MCF 10A (cell line): ENCODE measurements at regions of chr12 and their contacts with region 1.

Region 1: GRCh38 chr12:100229058-100229637 is 28.5 kb downstream of the ACTR6 start:
- DNase-seq: peak; percentile 53
- H3K4me3 Mint-ChIP-seq: peak overlapping the region; percentile 10
- H3K27ac Mint-ChIP-seq: no peak overlapping the region
- H3K4me1 Mint-ChIP-seq: peaks cover 7% of the 10 kb centered on the region
- H3K27me3 Mint-ChIP-seq: no peaks in the 10 kb centered on the region
- CTCF ChIP-seq: peak; percentile 15

Region 2: GRCh38 chr12:100020370-100020769 is 208.8 kb before region 1 on chr12:
- CTCF ChIA-PET with region 1: no interaction called
- POLR2A ChIA-PET with region 1: no interaction called
- intact Hi-C with region 1: no loop called
- DNase-seq: no peak
- H3K4me3 Mint-ChIP-seq: no peak overlapping the region
- H3K27ac Mint-ChIP-seq: no peak overlapping the region
- H3K4me1 Mint-ChIP-seq: peaks cover 11% of the 10 kb centered on the region
- H3K27me3 Mint-ChIP-seq: no peaks in the 10 kb centered on the region
- CTCF ChIP-seq: no peak

Region 3: GRCh38 chr12:100043631-100044030 is 185.5 kb before region 1 on chr12:
- CTCF ChIA-PET with region 1: no interaction called
- POLR2A ChIA-PET with region 1: no interaction called
- intact Hi-C with region 1: no loop called
- DNase-seq: peak; percentile 16
- H3K4me3 Mint-ChIP-seq: no peak overlapping the region
- H3K27ac Mint-ChIP-seq: no peak overlapping the region
- H3K4me1 Mint-ChIP-seq: peaks cover 12% of the 10 kb centered on the region
- H3K27me3 Mint-ChIP-seq: no peaks in the 10 kb centered on the region
- CTCF ChIP-seq: no peak

Region 4: DNA sequence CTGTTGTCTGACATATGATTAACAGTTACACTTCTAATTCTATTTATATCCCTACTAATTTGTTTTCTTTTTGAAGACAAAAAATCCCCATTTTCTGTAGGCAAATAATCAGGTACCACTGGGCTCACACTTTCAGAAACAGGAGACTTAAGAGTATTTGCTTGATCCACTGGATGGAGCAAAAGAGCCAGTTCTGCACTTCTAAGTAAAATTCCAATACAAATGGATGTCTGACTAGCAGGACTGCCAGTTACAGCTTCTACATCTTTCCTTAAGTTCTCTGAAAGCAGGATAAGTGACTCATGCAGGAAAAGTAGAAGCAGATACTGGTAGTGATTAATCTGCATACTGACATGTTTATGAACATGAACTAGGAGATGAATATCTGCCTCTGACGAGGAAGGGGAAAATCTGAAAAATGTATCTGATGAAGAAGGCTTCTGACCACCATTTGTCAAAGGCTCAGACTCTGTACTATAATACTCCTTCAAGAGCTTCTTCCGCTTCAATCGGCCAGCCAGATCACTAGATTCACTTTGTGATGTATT is 170.6 kb before region 1 on chr12:
- CTCF ChIA-PET with region 1: interaction called, 3 read pairs
- POLR2A ChIA-PET with region 1: no interaction called
- intact Hi-C with region 1: loop called (anchors 10 kb)
- DNase-seq: peak; percentile 47
- H3K4me3 Mint-ChIP-seq: no peak overlapping the region
- H3K27ac Mint-ChIP-seq: no peak overlapping the region
- H3K4me1 Mint-ChIP-seq: no peaks in the 10 kb centered on the region
- H3K27me3 Mint-ChIP-seq: no peaks in the 10 kb centered on the region
- CTCF ChIP-seq: no peak

Region 5: GRCh38 chr12:100200463-100201181 is 28.5 kb before region 1 on chr12 and contains the start of gene ACTR6:
- CTCF ChIA-PET with region 1: interaction called, 6 read pairs
- POLR2A ChIA-PET with region 1: interaction called, 22 read pairs
- intact Hi-C with region 1: no loop called
- DNase-seq: peak; percentile 96
- H3K4me3 Mint-ChIP-seq: peak within 1 kb of the TSS; percentile 99
- H3K27ac Mint-ChIP-seq: peak within 1 kb of the TSS; percentile 93
- H3K4me1 Mint-ChIP-seq: peaks cover 10% of the 10 kb centered on the region
- H3K27me3 Mint-ChIP-seq: no peaks in the 10 kb centered on the region
- CTCF ChIP-seq: no peak
- total RNA-seq, gene ACTR6: 26.4 and 28.8 TPM in 2 replicates

Region 6: GRCh38 chr12:100208834-100209233 is 20.3 kb before region 1 on chr12:
- CTCF ChIA-PET with region 1: interaction called, 10 read pairs
- POLR2A ChIA-PET with region 1: interaction called, 4 read pairs
- intact Hi-C with region 1: no loop called
- DNase-seq: no peak
- H3K4me3 Mint-ChIP-seq: no peak overlapping the region
- H3K27ac Mint-ChIP-seq: no peak overlapping the region
- H3K4me1 Mint-ChIP-seq: no peaks in the 10 kb centered on the region
- H3K27me3 Mint-ChIP-seq: no peaks in the 10 kb centered on the region
- CTCF ChIP-seq: no peak